CD4-positive, alpha-beta memory T cell (primary cell): ENCODE measurements at regions of chr3 and their contacts with region 1.

Region 1: DNA sequence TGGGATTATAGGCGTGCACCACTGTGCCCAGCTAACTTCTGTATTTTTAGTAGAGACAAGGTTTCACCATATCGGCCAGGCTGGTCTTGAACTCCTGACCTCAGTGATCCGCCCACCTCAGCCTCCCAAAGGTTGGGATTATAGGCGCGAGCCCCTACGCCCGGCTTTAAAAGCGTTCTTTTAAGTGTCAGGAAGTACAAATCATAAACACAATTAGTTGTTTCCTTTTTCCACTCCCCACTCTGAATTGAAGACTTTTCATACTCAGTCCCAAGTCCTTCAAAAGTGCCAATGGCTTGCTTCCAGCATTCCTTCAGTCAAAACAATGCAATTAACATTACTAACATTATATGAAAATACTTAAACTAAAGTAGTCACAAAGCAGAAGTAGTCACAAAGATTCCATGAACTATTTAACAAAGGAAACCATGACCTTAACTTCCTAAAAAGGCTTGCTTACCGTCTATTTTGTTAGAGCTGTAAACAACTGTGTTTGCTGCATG is 8.1 kb downstream of the WDR82 start:
- DNase-seq: no peak
- H3K4me3 ChIP-seq: peak overlapping the region in 1 of 2 donors; percentile 47
- H3K4me3 Mint-ChIP-seq: peak overlapping the region; percentile 84 to 99 (median 92)
- H3K27ac ChIP-seq: peak overlapping the region; percentile 74
- H3K27ac Mint-ChIP-seq: peak overlapping the region; percentile 95 to 100 (median 96)
- H3K4me1 ChIP-seq: peaks cover 96% of the 10 kb centered on the region
- H3K4me1 Mint-ChIP-seq: peaks cover 59 to 93% (median 75%) of the 10 kb centered on the region in 4 donors
- H3K27me3 ChIP-seq: no peaks in the 10 kb centered on the region
- H3K27me3 Mint-ChIP-seq: no peaks in the 10 kb centered on the region

Region 2: DNA sequence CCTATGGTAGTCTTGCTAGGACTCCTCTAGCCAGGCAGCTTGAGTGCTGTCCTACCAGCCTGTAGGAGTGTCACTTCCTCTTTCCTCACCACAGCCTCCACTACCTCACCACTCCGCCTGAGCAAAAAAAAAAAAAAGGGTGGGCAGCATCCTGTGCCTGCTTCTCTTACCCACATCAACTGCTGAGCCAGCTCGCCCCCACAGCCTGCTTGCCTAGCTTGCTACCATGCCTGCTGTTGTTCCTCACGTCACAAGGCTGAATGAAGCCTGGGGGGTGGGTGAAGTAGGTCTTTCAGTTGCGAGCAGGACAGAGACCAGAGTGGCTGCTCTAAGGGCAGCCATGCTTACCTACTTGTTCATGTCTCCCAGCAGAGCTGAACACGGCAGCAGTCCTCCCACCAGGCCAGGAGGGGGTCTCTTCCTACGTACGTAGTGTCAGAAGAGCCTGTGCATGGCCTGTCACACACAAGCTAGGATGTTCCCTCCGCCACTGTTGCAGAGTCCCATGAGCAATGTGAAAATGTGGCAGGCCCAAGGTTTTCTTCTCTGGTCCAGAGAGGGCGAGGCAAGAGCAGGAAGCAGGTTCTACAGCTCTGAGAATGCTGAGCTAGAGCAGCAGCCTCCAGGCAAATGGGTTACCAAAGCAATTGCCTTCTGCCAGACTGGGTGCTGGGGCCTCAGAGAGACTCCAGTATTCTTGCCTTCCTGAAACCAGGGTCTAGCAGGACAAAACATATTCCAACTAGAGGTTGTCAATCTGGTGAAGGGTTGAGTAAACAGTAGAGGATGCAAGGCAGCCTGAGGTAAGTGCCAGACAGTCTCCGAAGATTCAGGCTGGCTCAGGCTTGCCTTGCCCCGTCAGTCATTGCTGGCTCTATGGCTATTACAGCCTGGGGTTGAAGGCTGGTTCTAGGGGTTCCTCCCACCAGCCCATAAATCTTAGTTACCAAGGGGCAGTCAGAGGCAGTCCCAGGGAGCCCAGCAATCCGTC is 16.7 kb before region 1 on chr3:
- CTCF ChIA-PET with region 1: interaction called, 684 read pairs
- POLR2A ChIA-PET with region 1: interaction called, 1,950 read pairs
- intact Hi-C with region 1: loop called (anchors 1 kb)
- DNase-seq: peak; percentile 90 to 97 (median 93)
- H3K4me3 ChIP-seq: peak overlapping the region; percentile 10 to 16
- H3K4me3 Mint-ChIP-seq: peak overlapping the region; percentile 85 to 97 (median 90)
- H3K27ac ChIP-seq: peak overlapping the region; percentile 86
- H3K27ac Mint-ChIP-seq: peak overlapping the region; percentile 97 to 100 (median 100)
- H3K4me1 ChIP-seq: peaks cover 99% of the 10 kb centered on the region
- H3K4me1 Mint-ChIP-seq: peaks cover 54 to 99% (median 82%) of the 10 kb centered on the region in 4 donors
- H3K27me3 ChIP-seq: no peaks in the 10 kb centered on the region
- H3K27me3 Mint-ChIP-seq: no peaks in the 10 kb centered on the region

Region 3: GRCh38 chr3:52259035-52259434 is 11.3 kb before region 1 on chr3:
- CTCF ChIA-PET with region 1: interaction called, 684 read pairs
- POLR2A ChIA-PET with region 1: interaction called, 1,950 read pairs
- intact Hi-C with region 1: loop called (anchors 1 kb)
- DNase-seq: no peak
- H3K4me3 ChIP-seq: no peak overlapping the region
- H3K4me3 Mint-ChIP-seq: no peak overlapping the region
- H3K27ac ChIP-seq: peak overlapping the region; percentile 45
- H3K27ac Mint-ChIP-seq: peak overlapping the region; percentile 49 to 97 (median 83)
- H3K4me1 ChIP-seq: peaks cover 97% of the 10 kb centered on the region
- H3K4me1 Mint-ChIP-seq: peaks cover 57 to 98% (median 83%) of the 10 kb centered on the region in 4 donors
- H3K27me3 ChIP-seq: no peaks in the 10 kb centered on the region
- H3K27me3 Mint-ChIP-seq: no peaks in the 10 kb centered on the region

Region 4: GRCh38 chr3:52291508-52292181 is 21.3 kb after region 1 on chr3:
- CTCF ChIA-PET with region 1: interaction called, 7 read pairs
- POLR2A ChIA-PET with region 1: interaction called, 1,950 read pairs
- intact Hi-C with region 1: no loop called
- DNase-seq: no peak
- H3K4me3 ChIP-seq: no peak overlapping the region
- H3K4me3 Mint-ChIP-seq: peak overlapping the region in 4 of 8 donors; percentile 29 to 78 (median 40)
- H3K27ac ChIP-seq: no peak overlapping the region
- H3K27ac Mint-ChIP-seq: peak overlapping the region in 4 of 7 donors; percentile 35 to 83 (median 64)
- H3K4me1 ChIP-seq: peaks cover 31% of the 10 kb centered on the region
- H3K4me1 Mint-ChIP-seq: peaks cover 18 to 40% (median 27%) of the 10 kb centered on the region in 4 donors
- H3K27me3 ChIP-seq: no peaks in the 10 kb centered on the region
- H3K27me3 Mint-ChIP-seq: no peaks in the 10 kb centered on the region